ENCODE measurements at regions of chr7 and their contacts with region 1.

Region 1: GRCh38 chr7:12686894-12687717 is at the start of gene ARL4A:
- DNase-seq: peak; percentile 91 to 100 (median 96)
- ATAC-seq: peak; percentile 87
- H3K4me3 ChIP-seq: peak within 1 kb of the TSS; percentile 61
- H3K27ac ChIP-seq: peak within 1 kb of the TSS; percentile 95
- H3K4me1 ChIP-seq: peaks cover 8 to 9% of the 10 kb centered on the region in 2 experiments; a peak in 3 of 5 replicates
- H3K27me3 ChIP-seq: no peaks in the 10 kb centered on the region
- CTCF ChIP-seq: peak; percentile 67 to 84 (median 83)
- EP300 ChIP-seq: no peak
- POLR2A ChIP-seq: peak; percentile 99
- RAD21 ChIP-seq: peak; percentile 90 to 98
- polyA plus RNA-seq, gene ARL4A: 553 to 688 TPM

Region 2: DNA sequence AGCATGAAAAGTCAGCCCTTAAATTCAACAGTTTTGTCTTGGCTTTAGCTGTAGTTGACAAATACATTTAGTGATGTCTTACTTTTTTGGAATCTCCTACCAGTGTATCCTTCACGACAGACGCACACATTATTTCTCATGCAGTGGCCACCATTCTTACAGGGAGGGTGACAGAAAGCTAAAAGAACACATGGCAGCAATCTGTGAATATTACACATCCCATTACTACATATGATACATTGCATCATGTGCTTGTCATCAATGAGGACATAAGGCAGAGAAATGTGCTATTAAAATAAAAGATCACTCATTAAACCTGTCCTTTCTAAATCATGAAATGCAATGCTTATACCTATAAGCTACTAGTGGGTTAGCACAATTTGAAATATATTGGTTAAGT is 350.0 kb before region 1 on chr7:
- CTCF ChIA-PET with region 1: no interaction called
- POLR2A ChIA-PET with region 1: no interaction called
- in situ Hi-C with region 1: no loop called
- intact Hi-C with region 1: no loop called
- DNase-seq: no peak
- ATAC-seq: peak; percentile 22; the same call in 1 of the 3 replicates
- H3K4me3 ChIP-seq: no peak overlapping the region
- H3K27ac ChIP-seq: no peak overlapping the region
- H3K4me1 ChIP-seq: no peaks in the 10 kb centered on the region
- H3K27me3 ChIP-seq: no peaks in the 10 kb centered on the region
- CTCF ChIP-seq: no peak
- EP300 ChIP-seq: no peak
- POLR2A ChIP-seq: no peak
- RAD21 ChIP-seq: no peak

Region 3: DNA sequence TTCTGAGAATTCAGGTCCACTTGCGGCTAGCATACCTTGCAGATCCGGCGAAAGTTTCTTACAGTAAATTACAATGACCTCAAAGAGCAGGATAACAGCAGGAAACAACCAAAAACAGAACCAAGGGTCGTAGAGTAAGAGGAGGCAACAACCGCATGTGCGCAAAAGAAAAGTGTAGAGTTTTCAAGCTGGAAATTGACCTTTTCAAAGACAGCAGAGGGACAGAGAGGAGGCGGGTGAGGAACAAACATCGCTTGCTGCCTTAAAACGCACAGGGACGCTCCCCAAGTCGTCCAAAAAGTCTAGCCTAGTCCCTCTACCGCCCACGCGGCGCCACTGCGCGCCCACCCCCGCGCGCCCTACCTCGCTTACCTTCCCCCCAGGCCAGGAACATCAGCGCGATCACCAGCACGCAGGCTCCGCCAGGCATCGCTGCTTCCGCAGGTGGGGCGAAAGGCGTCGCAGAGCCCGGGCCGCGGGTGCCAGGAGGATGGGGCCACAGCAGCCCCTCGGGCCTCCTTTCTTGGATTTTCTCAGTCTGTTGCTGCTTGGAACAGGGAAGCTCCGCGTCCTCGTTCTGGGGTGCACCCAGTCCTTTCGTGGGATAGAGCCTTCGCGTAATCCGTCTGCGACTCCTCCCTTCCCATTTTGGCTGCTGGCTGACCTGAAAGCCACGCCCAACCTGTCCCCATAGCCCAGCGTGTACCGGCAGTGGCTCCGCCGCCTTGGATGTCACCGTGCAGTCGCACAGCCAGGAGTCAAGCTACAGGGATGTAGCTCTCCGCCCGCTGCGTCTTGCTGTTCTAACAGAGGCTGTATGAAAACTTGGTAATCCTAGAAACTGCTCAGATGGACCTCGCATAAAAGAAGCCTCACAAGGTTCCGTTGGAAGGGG is 283.6 kb before region 1 on chr7 and contains the start of gene VWDE:
- CTCF ChIA-PET with region 1: no interaction called
- POLR2A ChIA-PET with region 1: no interaction called
- in situ Hi-C with region 1: no loop called
- intact Hi-C with region 1: loop called (anchors 1 kb)
- DNase-seq: peak; percentile 81 to 96 (median 85)
- ATAC-seq: peak; percentile 83
- H3K4me3 ChIP-seq: peak within 1 kb of the TSS; percentile 67
- H3K27ac ChIP-seq: peak within 1 kb of the TSS; percentile 97
- H3K4me1 ChIP-seq: peaks cover 3% of the 10 kb centered on the region in 2 experiments; a peak in 3 of 5 replicates
- H3K27me3 ChIP-seq: no peaks in the 10 kb centered on the region
- CTCF ChIP-seq: peak; percentile 29 to 58 (median 45)
- EP300 ChIP-seq: peak; percentile 57
- POLR2A ChIP-seq: peak; percentile 90
- RAD21 ChIP-seq: peak in 1 of 2 experiments; percentile 22; a peak in 1 of 4 replicates
- polyA plus RNA-seq, gene VWDE: 40.6 to 51.0 TPM

Region 4: DNA sequence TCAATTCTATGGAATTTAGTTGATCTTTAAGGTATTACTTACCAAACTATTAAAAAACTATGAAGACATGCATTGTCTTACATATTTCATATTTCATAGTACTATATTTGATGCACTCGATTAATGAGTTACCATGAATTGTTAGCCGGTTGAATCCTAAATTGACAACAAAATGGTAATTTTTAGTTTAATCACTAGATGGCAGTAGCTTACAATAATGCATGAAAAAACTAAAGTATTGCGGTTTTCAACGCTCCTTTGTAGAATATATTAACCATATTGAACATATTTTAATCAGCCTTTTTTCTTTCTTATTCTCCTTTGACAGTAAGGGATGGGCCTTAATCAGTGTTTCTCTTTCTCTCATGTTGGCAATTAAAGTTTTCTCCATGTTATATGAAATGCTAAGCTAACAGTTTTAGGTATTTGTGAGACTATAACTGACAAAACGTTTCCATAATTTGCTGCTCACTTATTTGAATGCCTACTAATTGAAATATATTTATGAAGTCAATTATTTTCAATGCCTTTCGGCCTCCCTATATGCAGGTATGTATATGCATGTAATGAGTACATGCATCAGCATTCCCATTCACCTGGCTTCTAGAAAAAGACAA is 48.1 kb before region 1 on chr7:
- CTCF ChIA-PET with region 1: interaction called, 3 read pairs
- POLR2A ChIA-PET with region 1: interaction called, 4 read pairs
- in situ Hi-C with region 1: no loop called
- intact Hi-C with region 1: loop called (anchors 2 kb)
- DNase-seq: peak; percentile 19 to 46 (median 24)
- ATAC-seq: peak; percentile 61
- H3K4me3 ChIP-seq: no peak overlapping the region
- H3K27ac ChIP-seq: no peak overlapping the region
- H3K4me1 ChIP-seq: no peaks in the 10 kb centered on the region; a peak in 4 of 5 replicates
- H3K27me3 ChIP-seq: no peaks in the 10 kb centered on the region
- CTCF ChIP-seq: peak in 2 of 3 experiments; percentile 44 to 78; a peak in 4 of 6 replicates
- EP300 ChIP-seq: no peak
- POLR2A ChIP-seq: no peak
- RAD21 ChIP-seq: peak; percentile 86 to 90

Region 5: DNA sequence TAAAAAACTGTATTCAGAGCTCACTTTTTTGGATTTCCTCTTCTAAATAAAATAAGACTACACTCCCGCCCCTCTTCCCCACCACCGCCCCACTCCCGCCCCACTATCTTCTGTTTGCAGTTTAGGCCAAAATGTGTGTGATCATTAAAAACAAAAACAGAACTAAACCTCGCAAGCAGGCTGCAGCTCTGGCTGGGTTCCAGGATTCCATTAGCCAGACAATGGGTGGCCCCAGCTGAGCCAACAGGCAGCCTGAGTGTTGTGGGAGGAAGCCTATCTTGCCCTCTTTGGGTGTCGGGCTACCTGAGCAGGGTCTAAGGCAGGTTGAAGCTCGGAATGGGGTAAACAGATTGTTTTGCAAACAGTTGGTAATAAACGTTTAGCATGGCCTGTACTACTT is 42.0 kb after region 1 on chr7:
- CTCF ChIA-PET with region 1: no interaction called
- POLR2A ChIA-PET with region 1: interaction called, 8 read pairs
- in situ Hi-C with region 1: no loop called
- intact Hi-C with region 1: loop called (anchors 2 kb)
- DNase-seq: peak; percentile 80 to 98 (median 82)
- ATAC-seq: peak; percentile 71
- H3K4me3 ChIP-seq: no peak overlapping the region
- H3K27ac ChIP-seq: peak overlapping the region; percentile 95
- H3K4me1 ChIP-seq: peaks cover 8 to 62% of the 10 kb centered on the region in 2 experiments
- H3K27me3 ChIP-seq: no peaks in the 10 kb centered on the region
- CTCF ChIP-seq: 0 out of 6 replicates have a peak, but pooled peaks of 1 of the 3 experiments have one; percentile 1
- EP300 ChIP-seq: peak; percentile 87
- POLR2A ChIP-seq: no peak
- RAD21 ChIP-seq: no peak; a peak in 2 of 4 replicates

Region 6: DNA sequence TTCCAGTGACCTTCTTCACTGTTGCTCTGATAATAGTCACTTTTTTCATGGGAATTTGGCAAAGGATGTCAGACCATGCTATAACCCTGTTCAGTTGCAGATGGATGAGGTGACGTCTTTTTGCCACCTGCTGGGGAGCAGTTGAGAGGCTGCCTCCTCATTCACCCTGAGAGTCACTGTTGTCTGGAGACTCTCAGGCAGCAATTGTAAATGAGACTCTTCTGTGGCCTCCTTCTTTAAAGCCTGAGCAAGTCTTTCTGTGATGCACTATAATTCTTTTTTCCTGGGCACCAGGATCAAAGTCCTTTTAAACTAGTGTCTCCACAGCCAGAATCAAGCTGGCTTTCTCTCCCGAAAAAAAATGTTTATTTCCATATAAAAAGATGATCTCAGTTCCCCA is 345.5 kb after region 1 on chr7:
- CTCF ChIA-PET with region 1: no interaction called
- POLR2A ChIA-PET with region 1: interaction called, 3 read pairs
- in situ Hi-C with region 1: no loop called
- intact Hi-C with region 1: loop called (anchors 10 kb)
- DNase-seq: peak in 1 of 4 experiments; percentile 31
- ATAC-seq: peak; percentile 83
- H3K4me3 ChIP-seq: no peak overlapping the region
- H3K27ac ChIP-seq: no peak overlapping the region
- H3K4me1 ChIP-seq: no peaks in the 10 kb centered on the region
- H3K27me3 ChIP-seq: no peaks in the 10 kb centered on the region
- CTCF ChIP-seq: peak in 2 of 3 experiments; percentile 8 to 9; a peak in 1 of 6 replicates
- EP300 ChIP-seq: no peak
- POLR2A ChIP-seq: no peak
- RAD21 ChIP-seq: peak in 1 of 2 experiments; percentile 31; a peak in 2 of 4 replicates

Region 7: GRCh38 chr7:13179102-13179501 is 492.0 kb after region 1 on chr7:
- CTCF ChIA-PET with region 1: interaction called, 7 read pairs
- POLR2A ChIA-PET with region 1: no interaction called
- in situ Hi-C with region 1: no loop called
- intact Hi-C with region 1: loop called (anchors 1 kb)
- DNase-seq: peak in 2 of 4 experiments; percentile 12 to 48
- ATAC-seq: peak; percentile 86
- H3K4me3 ChIP-seq: no peak overlapping the region
- H3K27ac ChIP-seq: no peak overlapping the region
- H3K4me1 ChIP-seq: peaks cover 0 to 2% of the 10 kb centered on the region in 2 experiments; a peak in 1 of 5 replicates
- H3K27me3 ChIP-seq: no peaks in the 10 kb centered on the region
- CTCF ChIP-seq: peak in 2 of 3 experiments; percentile 38 to 51; a peak in 3 of 6 replicates
- EP300 ChIP-seq: no peak
- POLR2A ChIP-seq: no peak
- RAD21 ChIP-seq: peak; percentile 55 to 77

Region 8: GRCh38 chr7:13981070-13981469 is 1294.0 kb after region 1 on chr7:
- CTCF ChIA-PET with region 1: no interaction called
- POLR2A ChIA-PET with region 1: no interaction called
- in situ Hi-C with region 1: no loop called
- intact Hi-C with region 1: loop called (anchors 2 kb)
- DNase-seq: peak; percentile 74 to 91 (median 79)
- ATAC-seq: peak; percentile 80
- H3K4me3 ChIP-seq: no peak overlapping the region
- H3K27ac ChIP-seq: peak overlapping the region; percentile 85
- H3K4me1 ChIP-seq: peaks cover 0 to 19% of the 10 kb centered on the region in 2 experiments; a peak in 3 of 5 replicates
- H3K27me3 ChIP-seq: no peaks in the 10 kb centered on the region
- CTCF ChIP-seq: no peak
- EP300 ChIP-seq: peak; percentile 60; the same call in 1 of the 2 replicates
- POLR2A ChIP-seq: peak; percentile 60
- RAD21 ChIP-seq: peak in 1 of 2 experiments; percentile 29; a peak in 1 of 4 replicates

Measured in K562 (cell line).